Right ventricle myocardium superior (tissue), 1 donor: ENCODE measurements at regions of chr18 and their contacts with region 1.

Region 1: GRCh38 chr18:63022429-63023022 is 297.0 kb downstream of the BCL2 start:
- DNase-seq: no peak
- ATAC-seq: peak; percentile 36

Region 2: GRCh38 chr18:62606106-62606505 is 416.4 kb before region 1 on chr18:
- intact Hi-C with region 1: no loop called
- DNase-seq: no peak
- ATAC-seq: no peak

Region 3: DNA sequence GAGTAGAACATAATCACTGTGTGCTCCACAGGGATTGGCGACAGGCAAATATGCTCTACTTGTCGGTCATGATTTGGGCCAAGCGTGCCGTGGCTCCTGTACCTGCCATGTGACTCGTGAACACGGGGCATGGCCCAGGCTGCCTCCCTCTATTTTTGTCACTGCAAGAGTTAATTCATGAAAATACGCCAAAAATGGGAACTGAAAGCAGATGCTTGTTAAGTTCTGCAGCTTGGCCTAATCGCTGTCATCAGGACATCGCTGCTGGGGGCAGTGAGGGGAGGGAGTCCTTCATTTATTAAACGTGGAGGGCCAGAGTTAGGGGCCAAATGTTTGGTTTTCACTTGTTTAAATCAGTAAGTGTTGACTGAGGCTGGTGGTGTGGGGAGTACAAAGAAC is 119.3 kb after region 1 on chr18:
- intact Hi-C with region 1: loop called (anchors 5 kb)
- DNase-seq: no peak
- ATAC-seq: no peak